ENCODE measurements at regions of chr11 and their contacts with region 1.

Region 1: GRCh38 chr11:47847892-47848635 is at the start of gene NUP160:
- DNase-seq: peak; percentile 92
- ATAC-seq: peak; percentile 83
- H3K4me3 Mint-ChIP-seq: peak within 1 kb of the TSS; percentile 98
- H3K27ac Mint-ChIP-seq: peak within 1 kb of the TSS; percentile 97
- H3K4me1 Mint-ChIP-seq: peaks cover 67% of the 10 kb centered on the region
- H3K27me3 Mint-ChIP-seq: no peaks in the 10 kb centered on the region
- CTCF ChIP-seq: no peak
- total RNA-seq, gene NUP160: 53.2 and 70.8 TPM in 2 replicates

Region 2: GRCh38 chr11:47373876-47374720 is 474.0 kb before region 1 on chr11:
- CTCF ChIA-PET with region 1: no interaction called
- POLR2A ChIA-PET with region 1: no interaction called
- intact Hi-C with region 1: loop called (anchors 1 kb)
- DNase-seq: peak; percentile 81
- ATAC-seq: no peak
- H3K4me3 Mint-ChIP-seq: no peak overlapping the region
- H3K27ac Mint-ChIP-seq: peak overlapping the region; percentile 70
- H3K4me1 Mint-ChIP-seq: peaks cover 54% of the 10 kb centered on the region
- H3K27me3 Mint-ChIP-seq: no peaks in the 10 kb centered on the region
- CTCF ChIP-seq: peak; percentile 83

Region 3: GRCh38 chr11:47642099-47642855 is 205.8 kb before region 1 on chr11 and contains the start of gene MTCH2:
- CTCF ChIA-PET with region 1: no interaction called
- POLR2A ChIA-PET with region 1: no interaction called
- intact Hi-C with region 1: loop called (anchors 2 kb)
- DNase-seq: peak; percentile 95
- ATAC-seq: peak; percentile 94
- H3K4me3 Mint-ChIP-seq: peak within 1 kb of the TSS; percentile 94
- H3K27ac Mint-ChIP-seq: peak within 1 kb of the TSS; percentile 95
- H3K4me1 Mint-ChIP-seq: peaks cover 25% of the 10 kb centered on the region
- H3K27me3 Mint-ChIP-seq: no peaks in the 10 kb centered on the region
- CTCF ChIP-seq: no peak
- total RNA-seq, gene MTCH2: 73.3 and 81.7 TPM in 2 replicates

Region 4: GRCh38 chr11:47715082-47715669 is 132.9 kb before region 1 on chr11 and contains the start of gene AGBL2:
- CTCF ChIA-PET with region 1: interaction called, 3 read pairs
- POLR2A ChIA-PET with region 1: interaction called, 3 read pairs
- intact Hi-C with region 1: loop called (anchors 2 kb)
- DNase-seq: peak; percentile 82
- ATAC-seq: peak; percentile 99
- H3K4me3 Mint-ChIP-seq: peak within 1 kb of the TSS; percentile 96
- H3K27ac Mint-ChIP-seq: peak within 1 kb of the TSS; percentile 97
- H3K4me1 Mint-ChIP-seq: peaks cover 11% of the 10 kb centered on the region
- H3K27me3 Mint-ChIP-seq: no peaks in the 10 kb centered on the region
- CTCF ChIP-seq: no peak
- total RNA-seq, gene AGBL2: 7.0 and 8.2 TPM in 2 replicates

Region 5: DNA sequence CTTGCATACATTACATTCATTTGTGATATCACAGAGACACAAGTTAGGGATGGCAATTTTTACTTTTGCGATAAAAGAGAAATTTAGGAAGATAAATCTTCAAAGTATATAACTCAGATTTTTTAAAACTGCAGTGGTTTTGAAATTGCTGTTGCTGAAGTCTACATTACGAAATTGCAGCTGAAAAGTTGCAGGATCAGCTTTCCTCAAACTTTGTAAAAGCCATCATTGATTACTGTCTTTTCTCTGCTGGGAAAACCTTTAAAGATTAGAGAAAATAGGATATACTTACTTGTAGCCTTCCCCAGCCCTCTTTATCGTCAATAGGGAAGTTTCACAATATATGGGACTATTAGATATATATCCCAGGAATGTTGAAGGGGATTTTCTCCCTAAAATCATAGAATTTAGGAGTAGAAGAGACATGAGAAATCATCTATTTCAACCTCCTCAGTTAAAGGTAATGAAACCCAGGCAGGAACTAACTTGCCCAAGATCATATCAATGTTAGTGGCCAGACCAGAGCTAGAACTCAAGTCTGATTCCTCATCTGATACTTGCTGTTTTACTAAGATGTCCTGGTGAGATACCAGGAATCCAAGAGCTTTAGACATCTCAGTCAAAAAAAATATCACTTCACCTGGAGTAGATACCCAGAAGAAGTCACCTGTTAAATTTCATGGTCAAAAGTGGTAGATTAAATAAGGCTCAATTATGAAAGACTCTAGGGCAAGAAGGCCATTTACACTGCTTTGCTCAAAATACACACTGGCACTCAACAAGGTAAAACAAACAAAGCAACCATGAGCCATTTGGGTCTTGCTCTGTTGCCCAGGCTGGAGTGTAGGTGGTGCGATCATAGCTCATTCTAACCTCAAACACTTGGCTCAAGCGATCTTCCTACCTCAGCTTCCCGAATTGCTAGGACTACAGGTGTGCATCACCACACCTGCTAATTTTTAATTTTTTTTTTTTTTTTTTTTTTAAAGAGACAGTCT is 122.3 kb before region 1 on chr11:
- CTCF ChIA-PET with region 1: no interaction called
- POLR2A ChIA-PET with region 1: no interaction called
- intact Hi-C with region 1: no loop called
- DNase-seq: no peak
- ATAC-seq: no peak
- H3K4me3 Mint-ChIP-seq: no peak overlapping the region
- H3K27ac Mint-ChIP-seq: no peak overlapping the region
- H3K4me1 Mint-ChIP-seq: no peaks in the 10 kb centered on the region
- H3K27me3 Mint-ChIP-seq: no peaks in the 10 kb centered on the region
- CTCF ChIP-seq: no peak

Region 6: GRCh38 chr11:47766305-47767227 is 81.5 kb before region 1 on chr11:
- CTCF ChIA-PET with region 1: no interaction called
- POLR2A ChIA-PET with region 1: interaction called, 8 read pairs
- intact Hi-C with region 1: loop called (anchors 1 kb)
- DNase-seq: peak; percentile 63
- ATAC-seq: peak; percentile 20
- H3K4me3 Mint-ChIP-seq: peak overlapping the region; percentile 97
- H3K27ac Mint-ChIP-seq: peak overlapping the region; percentile 100
- H3K4me1 Mint-ChIP-seq: peaks cover 33% of the 10 kb centered on the region
- H3K27me3 Mint-ChIP-seq: no peaks in the 10 kb centered on the region
- CTCF ChIP-seq: no peak

Region 7: DNA sequence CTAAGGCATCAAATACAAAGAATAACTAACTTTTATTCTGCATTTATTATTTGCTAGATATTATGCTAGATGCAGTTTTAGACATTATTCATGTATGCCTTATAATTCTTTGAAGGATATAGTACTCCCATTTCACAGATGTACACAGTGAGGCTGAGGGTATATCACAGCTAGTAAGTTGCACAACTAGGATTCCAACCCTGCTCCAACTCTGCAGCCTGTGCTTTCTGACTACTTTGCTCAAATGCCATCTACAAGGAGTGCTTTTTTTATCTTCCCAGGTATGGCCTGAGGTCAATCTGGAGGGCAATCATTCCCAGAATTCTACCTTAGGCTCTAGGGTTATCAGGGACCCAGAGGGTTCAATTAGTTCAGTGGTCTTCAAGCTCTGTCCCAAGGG is 28.3 kb before region 1 on chr11:
- CTCF ChIA-PET with region 1: no interaction called
- POLR2A ChIA-PET with region 1: no interaction called
- intact Hi-C with region 1: loop called (anchors 5 kb)
- DNase-seq: no peak
- ATAC-seq: no peak
- H3K4me3 Mint-ChIP-seq: no peak overlapping the region
- H3K27ac Mint-ChIP-seq: peak overlapping the region; percentile 32
- H3K4me1 Mint-ChIP-seq: peaks cover 9% of the 10 kb centered on the region
- H3K27me3 Mint-ChIP-seq: no peaks in the 10 kb centered on the region
- CTCF ChIP-seq: no peak

Region 8: DNA sequence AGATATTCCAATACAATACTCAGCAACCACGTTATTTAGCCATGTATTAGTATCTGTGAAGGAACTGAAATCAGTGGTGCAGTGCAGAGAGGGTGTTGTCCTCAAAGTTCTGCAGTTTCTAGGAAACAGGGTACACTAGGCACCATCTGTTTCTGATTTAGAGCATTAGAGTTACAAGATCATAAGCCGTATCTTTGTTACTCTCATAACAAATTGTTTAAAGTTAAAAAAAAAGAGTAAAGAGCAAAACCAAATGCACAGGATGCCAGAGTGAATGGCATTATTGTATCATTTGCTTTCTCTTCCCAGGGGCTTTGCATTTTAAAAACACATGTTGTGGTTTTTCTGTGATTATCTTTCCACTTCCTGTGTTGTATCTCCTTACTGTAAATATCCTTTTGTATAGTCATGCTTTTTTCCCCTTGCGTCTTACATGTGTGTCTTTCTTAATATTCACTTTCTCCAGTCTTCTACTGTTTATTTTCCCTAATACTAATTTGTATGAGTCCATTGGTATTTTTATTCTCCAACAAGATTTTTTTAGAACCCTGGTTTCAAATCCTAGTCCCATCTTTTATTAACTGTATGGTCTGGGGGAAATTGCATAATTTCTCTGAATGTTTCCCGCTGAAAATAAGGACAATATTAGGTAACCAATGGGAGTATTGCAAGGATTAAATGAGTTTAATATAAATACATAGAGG is 15.3 kb after region 1 on chr11:
- CTCF ChIA-PET with region 1: interaction called, 14 read pairs
- POLR2A ChIA-PET with region 1: interaction called, 32 read pairs
- intact Hi-C with region 1: no loop called
- DNase-seq: no peak
- ATAC-seq: peak; percentile 69
- H3K4me3 Mint-ChIP-seq: peak overlapping the region; percentile 56
- H3K27ac Mint-ChIP-seq: peak overlapping the region; percentile 91
- H3K4me1 Mint-ChIP-seq: peaks cover 84% of the 10 kb centered on the region
- H3K27me3 Mint-ChIP-seq: no peaks in the 10 kb centered on the region
- CTCF ChIP-seq: no peak

Measured in activated B cell treated with CpG ODN at 0.5 μM for 24 hours (primary cell).